ENCODE measurements at regions of chr17 and their contacts with region 1.

Region 1: DNA sequence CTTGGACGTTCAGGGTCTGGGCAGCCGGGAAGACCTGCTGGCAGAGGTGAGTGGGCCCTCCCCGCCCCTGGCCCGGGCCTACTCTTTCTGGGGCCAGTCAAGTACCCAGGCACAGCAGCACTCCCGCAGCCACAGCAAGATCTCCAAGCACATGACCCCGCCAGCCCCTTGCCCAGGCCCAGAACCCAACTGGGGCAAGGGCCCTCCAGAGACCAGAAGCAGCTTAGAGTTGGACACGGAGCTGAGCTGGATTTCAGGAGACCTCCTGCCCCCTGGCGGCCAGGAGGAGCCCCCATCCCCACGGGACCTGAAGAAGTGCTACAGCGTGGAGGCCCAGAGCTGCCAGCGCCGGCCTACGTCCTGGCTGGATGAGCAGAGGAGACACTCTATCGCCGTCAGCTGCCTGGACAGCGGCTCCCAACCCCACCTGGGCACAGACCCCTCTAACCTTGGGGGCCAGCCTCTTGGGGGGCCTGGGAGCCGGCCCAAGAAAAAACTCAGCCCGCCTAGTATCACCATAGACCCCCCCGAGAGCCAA is 8.6 kb upstream of the ABCC3 start:
- DNase-seq: peak; percentile 40 to 80 (median 54)
- ATAC-seq: peak; percentile 62
- H3K4me3 ChIP-seq: no peak overlapping the region
- H3K4me3 Mint-ChIP-seq: no peak overlapping the region
- H3K27ac ChIP-seq: no peak overlapping the region
- H3K27ac Mint-ChIP-seq: no peak overlapping the region
- H3K4me1 ChIP-seq: peaks cover 9% of the 10 kb centered on the region
- H3K4me1 Mint-ChIP-seq: no peaks in the 10 kb centered on the region
- H3K27me3 ChIP-seq: peaks cover 42 to 45% of the 10 kb centered on the region in 2 experiments
- H3K27me3 Mint-ChIP-seq: peaks cover 68% of the 10 kb centered on the region
- CTCF ChIP-seq: peak; percentile 55

Region 2: GRCh38 chr17:50547035-50547735 is 78.9 kb before region 1 on chr17 and contains the start of gene SPATA20:
- CTCF ChIA-PET with region 1: interaction called, 17 read pairs
- POLR2A ChIA-PET with region 1: no interaction called
- intact Hi-C with region 1: loop called (anchors 1 kb)
- DNase-seq: peak; percentile 74 to 94 (median 79)
- ATAC-seq: peak; percentile 85
- H3K4me3 ChIP-seq: peak within 1 kb of the TSS; percentile 56
- H3K4me3 Mint-ChIP-seq: peak within 1 kb of the TSS; percentile 71
- H3K27ac ChIP-seq: no peak within 1 kb of the TSS
- H3K27ac Mint-ChIP-seq: no peak within 1 kb of the TSS
- H3K4me1 ChIP-seq: peaks cover 25% of the 10 kb centered on the region
- H3K4me1 Mint-ChIP-seq: peaks cover 21% of the 10 kb centered on the region
- H3K27me3 ChIP-seq: no peaks in the 10 kb centered on the region
- H3K27me3 Mint-ChIP-seq: peaks cover 6% of the 10 kb centered on the region
- CTCF ChIP-seq: peak; percentile 92
- total RNA-seq, gene SPATA20: 10.2 to 10.3 TPM

Region 3: GRCh38 chr17:50560185-50560824 is 65.8 kb before region 1 on chr17 and contains the start of gene CACNA1G:
- CTCF ChIA-PET with region 1: no interaction called
- POLR2A ChIA-PET with region 1: no interaction called
- intact Hi-C with region 1: loop called in 1 of 2 experiments (anchors 5 kb)
- DNase-seq: peak; percentile 70 to 93 (median 84)
- ATAC-seq: peak; percentile 85
- H3K4me3 ChIP-seq: peak within 1 kb of the TSS; percentile 60
- H3K4me3 Mint-ChIP-seq: peak within 1 kb of the TSS; percentile 85
- H3K27ac ChIP-seq: no peak within 1 kb of the TSS
- H3K27ac Mint-ChIP-seq: no peak within 1 kb of the TSS
- H3K4me1 ChIP-seq: peaks cover 44% of the 10 kb centered on the region
- H3K4me1 Mint-ChIP-seq: peaks cover 33% of the 10 kb centered on the region
- H3K27me3 ChIP-seq: peaks cover 60 to 66% of the 10 kb centered on the region in 2 experiments
- H3K27me3 Mint-ChIP-seq: peaks cover 77% of the 10 kb centered on the region
- CTCF ChIP-seq: no peak
- total RNA-seq, gene CACNA1G: not detected

Region 4: DNA sequence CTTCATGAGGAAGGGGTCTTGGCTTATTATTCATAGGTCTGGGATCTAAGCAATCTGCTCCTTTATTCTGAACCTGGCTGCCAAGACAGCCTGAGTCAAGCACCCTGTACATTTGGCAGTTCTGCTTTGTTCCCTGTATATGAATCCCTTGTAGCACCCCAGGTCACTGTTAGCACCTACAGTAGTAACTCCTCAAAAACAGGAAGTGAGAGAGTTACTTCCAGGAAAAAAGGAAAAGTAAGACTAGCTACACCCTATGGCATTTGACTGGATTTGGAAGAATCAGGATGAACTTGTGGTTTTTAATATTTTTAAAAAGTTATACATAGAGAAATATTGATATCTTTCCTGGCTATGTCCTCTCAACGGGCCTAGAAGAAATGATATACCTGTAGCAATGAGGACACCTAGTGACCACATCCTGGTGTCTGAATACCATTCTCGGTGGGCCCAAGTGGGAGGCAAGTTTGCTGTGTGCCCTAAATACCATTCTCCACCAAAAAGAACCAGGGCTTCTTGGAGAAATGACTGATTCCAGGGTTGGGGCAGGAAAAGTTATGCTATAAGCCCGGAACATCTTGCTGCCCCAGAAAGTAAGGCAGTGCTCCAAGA is 71.7 kb after region 1 on chr17:
- CTCF ChIA-PET with region 1: interaction called, 4 read pairs
- POLR2A ChIA-PET with region 1: no interaction called
- intact Hi-C with region 1: loop called in 1 of 2 experiments (anchors 5 kb)
- DNase-seq: peak in 2 of 14 experiments; percentile 19 to 21
- ATAC-seq: no peak
- H3K4me3 ChIP-seq: no peak overlapping the region
- H3K4me3 Mint-ChIP-seq: no peak overlapping the region
- H3K27ac ChIP-seq: no peak overlapping the region
- H3K27ac Mint-ChIP-seq: no peak overlapping the region
- H3K4me1 ChIP-seq: peaks cover 2% of the 10 kb centered on the region
- H3K4me1 Mint-ChIP-seq: peaks cover 26% of the 10 kb centered on the region
- H3K27me3 ChIP-seq: no peaks in the 10 kb centered on the region
- H3K27me3 Mint-ChIP-seq: no peaks in the 10 kb centered on the region
- CTCF ChIP-seq: no peak

Region 5: DNA sequence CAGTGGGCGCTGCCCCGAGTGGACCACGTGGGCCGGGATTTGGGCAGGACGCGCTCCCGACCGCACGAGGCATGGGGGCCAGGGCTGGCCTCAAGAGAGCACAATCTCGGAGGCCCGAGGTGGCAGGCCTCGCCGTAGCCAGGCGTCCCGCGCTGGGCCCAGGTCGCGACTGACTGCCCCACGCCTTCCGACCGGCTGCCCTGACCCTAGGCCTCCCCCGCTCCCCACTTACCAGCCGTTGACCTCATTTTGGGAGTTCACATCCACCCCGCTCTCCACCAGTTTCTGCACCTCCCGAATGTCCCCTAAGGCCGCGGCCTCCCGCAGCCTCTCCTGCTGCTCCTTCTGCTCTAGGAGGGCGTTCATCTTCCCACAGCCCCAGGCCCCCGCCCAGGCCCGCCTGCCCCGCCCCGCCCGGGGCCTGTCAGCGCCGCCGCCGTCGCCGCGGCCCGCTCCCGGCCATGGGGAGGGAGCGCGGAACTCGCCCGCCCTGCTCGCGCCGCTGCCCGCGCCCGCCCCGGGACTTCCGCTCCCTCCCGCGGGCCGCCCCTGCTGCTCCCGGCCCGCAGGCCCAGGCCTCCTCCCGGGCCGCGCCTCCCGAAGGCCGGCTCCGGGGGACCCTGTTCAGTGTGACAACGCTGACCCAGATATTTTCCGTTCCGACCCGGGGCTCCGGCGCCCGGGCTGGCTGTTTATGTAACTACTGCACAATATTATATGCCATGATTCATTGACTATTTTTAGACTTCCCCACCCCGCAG is 81.4 kb after region 1 on chr17 and contains the start of gene ANKRD40:
- CTCF ChIA-PET with region 1: no interaction called
- POLR2A ChIA-PET with region 1: no interaction called
- intact Hi-C with region 1: loop called in 1 of 2 experiments (anchors 5 kb)
- DNase-seq: peak; percentile 82 to 95 (median 89)
- ATAC-seq: peak; percentile 80
- H3K4me3 ChIP-seq: peak within 1 kb of the TSS; percentile 75
- H3K4me3 Mint-ChIP-seq: peak within 1 kb of the TSS; percentile 99
- H3K27ac ChIP-seq: peak within 1 kb of the TSS; percentile 84 to 95
- H3K27ac Mint-ChIP-seq: peak within 1 kb of the TSS; percentile 97
- H3K4me1 ChIP-seq: peaks cover 41% of the 10 kb centered on the region
- H3K4me1 Mint-ChIP-seq: peaks cover 44% of the 10 kb centered on the region
- H3K27me3 ChIP-seq: no peaks in the 10 kb centered on the region
- H3K27me3 Mint-ChIP-seq: no peaks in the 10 kb centered on the region
- CTCF ChIP-seq: no peak
- total RNA-seq, gene ANKRD40: 22.8 to 24.0 TPM

Region 6: DNA sequence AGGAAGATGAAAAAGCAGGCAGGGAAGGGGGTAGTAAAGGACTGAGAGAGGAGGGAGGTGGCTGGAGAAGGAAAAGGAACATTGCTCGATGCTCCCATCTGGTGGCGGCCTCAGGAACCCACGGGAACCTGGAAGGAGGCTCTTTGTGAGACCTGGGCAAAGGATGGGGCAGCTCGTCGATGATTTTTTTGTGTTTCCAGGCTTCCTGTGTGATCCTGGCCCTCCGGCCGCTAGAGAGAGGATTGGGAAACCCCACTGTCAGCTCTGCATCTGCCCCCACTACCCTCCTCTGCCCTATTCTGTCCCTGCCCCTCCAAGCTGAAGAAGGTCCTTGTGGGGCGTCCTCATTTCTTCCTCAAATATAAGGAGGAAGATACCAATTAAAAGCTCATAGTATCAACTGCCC is 215.8 kb after region 1 on chr17:
- CTCF ChIA-PET with region 1: no interaction called
- POLR2A ChIA-PET with region 1: no interaction called
- intact Hi-C with region 1: loop called (anchors 1 to 2 kb)
- DNase-seq: peak; percentile 23 to 72 (median 40)
- ATAC-seq: peak; percentile 62
- H3K4me3 ChIP-seq: no peak overlapping the region
- H3K4me3 Mint-ChIP-seq: no peak overlapping the region
- H3K27ac ChIP-seq: no peak overlapping the region
- H3K27ac Mint-ChIP-seq: no peak overlapping the region
- H3K4me1 ChIP-seq: peaks cover 5% of the 10 kb centered on the region
- H3K4me1 Mint-ChIP-seq: no peaks in the 10 kb centered on the region
- H3K27me3 ChIP-seq: no peaks in the 10 kb centered on the region
- H3K27me3 Mint-ChIP-seq: no peaks in the 10 kb centered on the region
- CTCF ChIP-seq: peak; percentile 62